Esophagus squamous epithelium (tissue), 5 donors: ENCODE measurements at regions of chr10 and their contacts with region 1.

Region 1: GRCh38 chr10:63711867-63712716 is 190.9 kb downstream of the REEP3 start:
- DNase-seq: peak; percentile 43
- H3K4me3 ChIP-seq: no peak overlapping the region
- H3K27ac ChIP-seq: peak overlapping the region; percentile 74 to 91 (median 86)
- H3K4me1 ChIP-seq: peaks cover 21 to 53% (median 39%) of the 10 kb centered on the region in 3 donors
- H3K27me3 ChIP-seq: no peaks in the 10 kb centered on the region
- CTCF ChIP-seq: no peak
- POLR2A ChIP-seq: peak in 1 of 4 donors; percentile 18

Region 2: GRCh38 chr10:63603709-63604445 is 108.2 kb before region 1 on chr10:
- intact Hi-C with region 1: no loop called
- DNase-seq: no peak
- H3K4me3 ChIP-seq: no peak overlapping the region
- H3K27ac ChIP-seq: no peak overlapping the region
- H3K4me1 ChIP-seq: no peaks in the 10 kb centered on the region
- H3K27me3 ChIP-seq: no peaks in the 10 kb centered on the region
- CTCF ChIP-seq: no peak
- POLR2A ChIP-seq: no peak

Region 3: DNA sequence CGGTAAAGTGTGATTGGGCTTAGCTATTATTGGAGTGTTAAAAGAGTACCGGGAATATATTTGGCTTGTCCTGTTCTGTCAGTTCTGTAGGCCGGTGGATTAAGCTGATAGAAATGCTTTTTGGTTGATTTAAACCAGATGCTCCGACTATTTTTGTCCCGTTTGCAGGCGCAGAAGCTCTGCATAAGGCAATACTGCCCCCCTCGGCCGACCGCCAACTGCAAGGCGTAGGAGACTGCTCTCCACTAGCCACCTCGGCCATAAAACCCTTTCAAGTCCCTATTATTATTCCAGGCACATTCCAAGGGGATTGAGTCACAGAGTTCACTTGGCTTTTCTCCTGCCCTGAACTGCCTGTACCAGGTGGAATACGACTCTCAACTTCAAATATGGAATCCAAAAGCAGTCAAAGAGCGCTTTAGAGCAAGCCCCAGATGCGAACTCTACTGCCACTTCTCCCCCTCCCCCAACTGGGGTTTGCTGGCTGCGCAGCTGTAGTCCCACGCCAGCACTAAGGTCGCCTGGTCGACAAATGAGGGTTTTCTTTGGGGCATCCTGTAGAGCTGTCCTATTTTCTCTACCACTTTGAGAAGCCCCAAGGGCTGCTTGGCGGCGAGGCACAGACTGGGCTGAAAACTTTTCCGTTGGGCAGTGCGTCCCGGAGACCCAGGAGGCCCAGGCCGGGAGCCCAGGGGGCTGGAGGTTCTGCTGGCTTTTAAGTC is 82.6 kb before region 1 on chr10:
- intact Hi-C with region 1: loop called (anchors 5 kb)
- DNase-seq: peak; percentile 44
- H3K4me3 ChIP-seq: peak overlapping the region; percentile 62 to 78 (median 69)
- H3K27ac ChIP-seq: peak overlapping the region; percentile 93 to 98 (median 98)
- H3K4me1 ChIP-seq: peaks cover 10 to 41% (median 18%) of the 10 kb centered on the region in 3 donors
- H3K27me3 ChIP-seq: no peaks in the 10 kb centered on the region
- CTCF ChIP-seq: peak; percentile 53 to 80 (median 75)
- POLR2A ChIP-seq: no peak

Region 4: GRCh38 chr10:63767138-63767801 is 55.2 kb after region 1 on chr10:
- intact Hi-C with region 1: no loop called
- DNase-seq: no peak
- H3K4me3 ChIP-seq: no peak overlapping the region
- H3K27ac ChIP-seq: no peak overlapping the region
- H3K4me1 ChIP-seq: no peaks in the 10 kb centered on the region
- H3K27me3 ChIP-seq: no peaks in the 10 kb centered on the region
- CTCF ChIP-seq: peak in 4 of 6 experiments; percentile 13 to 28 (median 22)
- POLR2A ChIP-seq: no peak